Sigmoid colon (tissue), 7 donors: ENCODE measurements at regions of chr3 and their contacts with region 1.

Region 1: DNA sequence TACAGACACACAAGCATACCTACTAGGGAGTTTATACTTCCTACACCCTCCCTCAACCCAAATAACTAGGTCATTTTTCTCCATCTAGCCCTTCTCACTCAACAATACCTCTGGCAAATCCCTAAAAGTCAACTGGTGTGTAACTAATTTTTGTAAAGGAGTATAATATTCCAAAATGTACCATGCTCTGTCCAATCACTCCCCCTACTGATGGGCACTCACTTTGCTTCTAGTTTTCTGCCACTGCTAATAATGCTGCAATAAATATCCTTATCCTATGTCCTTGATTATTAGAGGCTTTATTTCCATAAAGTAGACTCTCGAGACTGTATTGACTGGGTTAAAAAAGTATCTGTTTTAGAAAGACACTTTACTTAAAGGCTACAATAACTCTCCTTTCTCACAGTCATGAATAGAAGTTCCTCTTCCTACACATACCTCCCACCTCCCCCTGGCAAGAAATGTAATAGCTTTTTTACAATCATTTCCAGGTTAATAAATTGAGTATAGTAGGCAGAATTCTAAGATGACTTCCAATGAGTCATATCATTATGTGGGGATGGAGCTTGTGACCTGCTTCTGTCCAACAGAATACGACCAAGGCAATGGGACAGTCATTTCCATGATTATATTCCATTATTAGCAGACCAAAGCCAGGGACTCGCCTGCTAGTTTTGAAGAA is 30.0 kb downstream of the SHQ1 start:
- DNase-seq: no peak
- H3K4me3 ChIP-seq: no peak overlapping the region
- H3K27ac ChIP-seq: peak overlapping the region in 1 of 4 donors; percentile 1
- H3K4me1 ChIP-seq: peaks cover 0 to 32% (median 28%) of the 10 kb centered on the region in 4 donors
- H3K27me3 ChIP-seq: no peaks in the 10 kb centered on the region
- CTCF ChIP-seq: peak; percentile 11 to 46 (median 35)
- EP300 ChIP-seq: no peak
- POLR2A ChIP-seq: no peak

Region 2: DNA sequence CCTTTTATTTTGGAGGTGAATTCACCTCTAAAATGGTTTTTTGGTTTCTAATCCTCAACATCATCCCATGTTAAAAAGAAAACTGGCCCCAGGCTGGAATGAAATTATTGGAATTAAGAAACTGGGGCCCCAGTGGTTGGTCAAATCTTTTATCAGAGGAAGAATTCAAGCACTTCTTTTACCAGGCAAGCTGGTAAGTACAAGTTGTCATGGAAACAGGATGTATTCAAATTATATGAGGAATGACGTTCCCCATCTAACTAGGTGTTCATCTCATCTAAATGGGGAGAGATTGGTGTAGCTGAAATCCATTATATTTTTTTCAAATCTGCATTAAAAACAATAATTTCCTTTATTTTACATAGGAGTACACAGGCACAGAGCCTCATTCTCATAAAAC is 1083.3 kb before region 1 on chr3:
- intact Hi-C with region 1: loop called (anchors 5 kb)
- DNase-seq: no peak
- H3K4me3 ChIP-seq: no peak overlapping the region
- H3K27ac ChIP-seq: no peak overlapping the region
- H3K4me1 ChIP-seq: no peaks in the 10 kb centered on the region
- H3K27me3 ChIP-seq: no peaks in the 10 kb centered on the region
- CTCF ChIP-seq: no peak
- EP300 ChIP-seq: no peak
- POLR2A ChIP-seq: no peak

Region 3: DNA sequence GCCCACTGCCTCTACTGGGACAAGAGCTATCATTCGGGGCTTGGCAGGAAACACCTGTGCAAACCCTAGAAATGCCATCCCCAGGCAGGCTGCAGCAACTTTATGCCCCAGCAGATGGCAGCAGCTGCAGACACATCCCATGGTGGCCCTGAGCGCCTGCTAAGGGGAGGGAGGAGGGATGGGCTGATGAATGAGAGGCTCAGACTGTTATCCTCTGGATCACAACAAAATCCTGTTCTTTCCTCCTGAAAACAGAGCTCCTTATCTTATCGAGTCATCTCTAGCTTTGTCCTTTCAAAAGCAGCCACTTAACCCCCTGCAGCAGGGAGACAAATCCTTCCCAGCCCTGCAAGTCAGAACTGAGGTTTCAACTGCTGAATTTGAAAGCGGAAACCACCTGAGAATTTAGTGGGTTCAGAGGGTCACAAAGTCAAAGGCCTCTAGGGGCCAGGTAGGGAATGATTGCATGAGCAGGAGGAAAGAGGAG is 942.7 kb before region 1 on chr3:
- intact Hi-C with region 1: loop called (anchors 1 kb)
- DNase-seq: peak; percentile 85
- H3K4me3 ChIP-seq: no peak overlapping the region
- H3K27ac ChIP-seq: no peak overlapping the region
- H3K4me1 ChIP-seq: peaks cover 0 to 7% (median 3%) of the 10 kb centered on the region in 4 donors
- H3K27me3 ChIP-seq: no peaks in the 10 kb centered on the region
- CTCF ChIP-seq: peak; percentile 46 to 83 (median 74)
- EP300 ChIP-seq: no peak
- POLR2A ChIP-seq: no peak

Region 4: GRCh38 chr3:71955240-71956068 is 862.8 kb before region 1 on chr3:
- intact Hi-C with region 1: loop called (anchors 2 kb)
- DNase-seq: peak; percentile 82
- H3K4me3 ChIP-seq: no peak overlapping the region
- H3K27ac ChIP-seq: no peak overlapping the region
- H3K4me1 ChIP-seq: peaks cover 0 to 12% (median 9%) of the 10 kb centered on the region in 4 donors
- H3K27me3 ChIP-seq: no peaks in the 10 kb centered on the region
- CTCF ChIP-seq: peak in 3 of 4 experiments; percentile 51 to 79 (median 65)
- EP300 ChIP-seq: no peak
- POLR2A ChIP-seq: no peak

Region 5: DNA sequence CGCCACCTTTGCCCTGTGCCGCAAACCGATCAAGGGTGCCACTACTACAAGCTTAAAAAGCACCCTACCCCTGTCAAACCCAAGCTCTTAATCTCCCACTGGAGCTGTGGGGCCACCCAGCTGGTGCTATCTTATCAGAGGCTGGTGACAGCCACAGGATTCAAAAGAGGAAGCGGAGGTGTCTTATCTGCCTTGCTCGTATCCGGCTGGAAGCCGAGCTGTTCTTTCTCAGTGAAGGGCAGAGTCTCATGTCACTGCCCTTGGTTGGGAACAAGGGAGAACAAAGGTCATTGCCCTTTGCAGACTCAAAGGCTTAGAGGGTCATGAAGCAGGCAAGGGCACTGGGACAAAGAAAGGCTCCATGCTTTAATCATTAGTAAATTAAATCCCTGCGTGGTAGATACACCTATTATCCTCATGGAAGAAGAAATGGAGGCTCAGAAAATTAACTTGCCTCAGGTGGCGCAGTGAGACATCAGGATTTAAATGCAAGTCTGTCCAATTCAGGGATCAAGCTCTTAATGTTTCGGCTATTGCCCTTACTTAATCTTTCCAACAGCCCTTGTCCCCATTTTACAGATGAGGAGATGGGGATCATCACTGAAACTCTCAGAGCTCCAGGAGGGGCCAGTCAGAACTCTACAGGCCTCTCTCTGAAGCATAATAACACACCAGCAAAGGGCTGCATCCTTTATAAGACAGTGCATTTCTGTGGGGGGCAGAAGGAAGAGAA is 673.3 kb before region 1 on chr3:
- intact Hi-C with region 1: no loop called
- DNase-seq: no peak
- H3K4me3 ChIP-seq: no peak overlapping the region
- H3K27ac ChIP-seq: no peak overlapping the region
- H3K4me1 ChIP-seq: peaks cover 0 to 10% (median 5%) of the 10 kb centered on the region in 4 donors
- H3K27me3 ChIP-seq: no peaks in the 10 kb centered on the region
- CTCF ChIP-seq: no peak
- EP300 ChIP-seq: no peak
- POLR2A ChIP-seq: no peak

Region 6: DNA sequence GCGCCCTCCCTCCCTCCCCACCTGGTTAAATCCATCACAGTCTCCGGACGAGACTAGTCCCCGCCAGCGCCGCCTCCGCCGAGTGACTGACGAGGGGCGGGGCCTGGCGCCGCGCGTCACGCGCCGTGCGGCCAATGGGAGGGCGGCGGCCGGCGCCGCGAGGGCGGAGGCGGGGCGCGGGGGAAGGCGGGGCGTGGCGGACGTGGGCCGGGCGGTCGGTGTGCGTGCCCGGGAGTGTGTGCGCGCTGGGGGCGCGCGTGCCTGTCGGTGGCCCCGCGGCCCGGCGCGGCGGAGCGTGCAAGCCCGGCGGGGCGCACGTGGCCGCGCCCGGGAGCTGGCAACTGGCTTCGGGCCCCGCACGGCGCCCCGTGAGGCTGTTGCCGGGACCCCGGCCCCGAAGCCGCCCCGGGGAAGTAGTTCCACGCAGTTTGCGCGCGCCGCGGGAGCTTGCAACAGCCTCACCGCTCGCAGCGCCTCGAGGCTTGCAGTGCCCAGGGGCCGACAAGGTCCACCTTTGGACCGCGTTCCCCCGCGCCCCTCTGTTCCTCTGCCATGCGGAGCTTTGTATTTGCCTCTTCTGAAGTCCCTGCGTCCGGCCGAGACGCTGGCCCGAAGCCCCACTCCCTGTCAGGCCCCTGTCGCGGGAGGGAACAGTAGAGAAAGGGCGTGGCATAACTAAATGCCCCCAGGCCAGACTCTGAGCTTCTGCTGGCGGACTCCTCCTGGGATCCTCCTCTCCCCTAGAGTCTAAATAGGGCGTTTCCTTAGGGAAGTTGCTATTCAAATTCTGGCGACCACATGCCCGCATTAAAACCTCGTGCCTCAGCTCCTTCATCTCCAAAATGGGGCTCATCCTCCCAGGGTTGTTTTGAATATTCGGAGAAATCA is 370.9 kb before region 1 on chr3:
- intact Hi-C with region 1: loop called (anchors 5 kb)
- DNase-seq: peak; percentile 96
- H3K4me3 ChIP-seq: peak overlapping the region; percentile 63 to 92 (median 88)
- H3K27ac ChIP-seq: peak overlapping the region; percentile 85 to 96 (median 92)
- H3K4me1 ChIP-seq: peaks cover 0 to 34% (median 22%) of the 10 kb centered on the region in 4 donors
- H3K27me3 ChIP-seq: no peaks in the 10 kb centered on the region
- CTCF ChIP-seq: no peak
- EP300 ChIP-seq: no peak
- POLR2A ChIP-seq: no peak

Region 7: GRCh38 chr3:72665701-72666443 is 152.4 kb before region 1 on chr3:
- intact Hi-C with region 1: loop called (anchors 5 kb)
- DNase-seq: no peak
- H3K4me3 ChIP-seq: no peak overlapping the region
- H3K27ac ChIP-seq: no peak overlapping the region
- H3K4me1 ChIP-seq: peaks cover 0 to 7% (median 3%) of the 10 kb centered on the region in 4 donors
- H3K27me3 ChIP-seq: no peaks in the 10 kb centered on the region
- CTCF ChIP-seq: peak in 2 of 4 experiments; percentile 21 to 27
- EP300 ChIP-seq: no peak
- POLR2A ChIP-seq: no peak

Region 8: GRCh38 chr3:72872183-72872582 is 54.0 kb after region 1 on chr3:
- intact Hi-C with region 1: no loop called
- DNase-seq: no peak
- H3K4me3 ChIP-seq: no peak overlapping the region
- H3K27ac ChIP-seq: no peak overlapping the region
- H3K4me1 ChIP-seq: no peaks in the 10 kb centered on the region
- H3K27me3 ChIP-seq: no peaks in the 10 kb centered on the region
- CTCF ChIP-seq: no peak
- EP300 ChIP-seq: no peak
- POLR2A ChIP-seq: no peak

Region 9: DNA sequence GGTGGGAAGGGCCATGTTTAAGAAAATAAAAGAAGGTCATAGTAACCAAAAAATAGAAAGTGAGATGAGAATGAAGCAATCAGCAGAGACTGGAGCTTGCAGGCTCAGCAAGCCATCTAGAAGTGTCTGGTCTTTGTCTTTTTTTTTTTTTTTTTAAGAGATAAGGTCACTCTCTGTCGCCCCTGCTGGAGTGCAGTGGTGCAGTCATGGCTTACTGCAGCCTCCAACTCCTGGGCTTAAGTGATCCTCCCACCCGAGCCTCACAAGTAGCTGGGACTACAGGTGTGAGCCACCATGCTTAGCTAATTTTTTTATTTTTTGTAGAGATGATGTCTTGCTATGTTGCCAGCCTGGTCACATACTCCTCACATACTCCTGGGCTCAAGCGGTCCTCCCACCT is 105.8 kb after region 1 on chr3:
- intact Hi-C with region 1: no loop called
- DNase-seq: no peak
- H3K4me3 ChIP-seq: no peak overlapping the region
- H3K27ac ChIP-seq: no peak overlapping the region
- H3K4me1 ChIP-seq: no peaks in the 10 kb centered on the region
- H3K27me3 ChIP-seq: no peaks in the 10 kb centered on the region
- CTCF ChIP-seq: no peak
- EP300 ChIP-seq: no peak
- POLR2A ChIP-seq: no peak

Region 10: DNA sequence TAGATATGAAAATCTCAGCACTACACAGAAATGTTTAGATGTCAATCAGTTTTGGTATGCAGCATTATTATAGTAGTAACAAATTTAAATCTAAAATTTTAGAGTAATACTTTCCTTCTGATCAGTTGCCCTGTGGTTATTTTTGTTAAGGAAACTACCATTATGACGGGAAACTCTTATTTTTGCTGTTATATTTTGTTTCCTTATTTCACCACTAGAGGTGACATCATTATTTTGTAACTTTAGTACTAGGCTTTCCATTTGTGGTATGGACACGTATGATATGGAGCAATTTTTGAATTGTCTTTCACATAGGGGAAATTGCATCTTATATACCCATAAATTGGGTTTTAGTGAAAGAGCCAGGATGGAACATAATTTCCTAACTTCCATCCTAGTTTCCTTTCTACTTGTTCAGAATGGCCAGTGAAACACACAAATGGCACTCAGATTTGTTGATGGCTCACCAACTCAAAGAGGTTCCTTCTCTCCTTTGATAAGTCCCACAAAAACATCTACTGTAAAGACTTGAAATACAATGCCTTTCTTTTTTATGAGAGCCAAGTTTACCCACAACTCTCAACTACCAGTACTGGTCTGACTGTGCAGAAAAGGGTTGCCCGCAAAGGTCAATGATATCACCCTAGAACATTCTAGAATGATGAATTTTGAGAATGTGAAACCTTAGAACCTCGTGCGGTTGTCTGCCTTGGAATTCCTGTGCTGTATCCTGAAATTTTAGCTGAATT is 159.0 kb after region 1 on chr3:
- intact Hi-C with region 1: no loop called
- DNase-seq: no peak
- H3K4me3 ChIP-seq: no peak overlapping the region
- H3K27ac ChIP-seq: no peak overlapping the region
- H3K4me1 ChIP-seq: no peaks in the 10 kb centered on the region
- H3K27me3 ChIP-seq: no peaks in the 10 kb centered on the region
- CTCF ChIP-seq: no peak
- EP300 ChIP-seq: no peak
- POLR2A ChIP-seq: no peak